ENCODE measurements at regions of chr17 and their contacts with region 1.

Region 1: GRCh38 chr17:75109407-75110233 is at the start of gene ARMC7:
- DNase-seq: peak; percentile 90 to 95
- ATAC-seq: peak; percentile 87 to 91 (median 90)
- H3K4me3 ChIP-seq: peak within 1 kb of the TSS; percentile 68 to 96 (median 86)
- H3K27ac ChIP-seq: peak within 1 kb of the TSS; percentile 35 to 91 (median 86)
- H3K4me1 ChIP-seq: peaks cover 5 to 52% (median 31%) of the 10 kb centered on the region in 9 donors
- H3K27me3 ChIP-seq: no peaks in the 10 kb centered on the region
- CTCF ChIP-seq: no peak
- total RNA-seq, gene ARMC7: 4.7 to 7.9 (median 5.2) TPM

Region 2: GRCh38 chr17:74987418-74987908 is 122.2 kb before region 1 on chr17 and contains the start of gene CDR2L:
- intact Hi-C with region 1: loop called in 1 of 10 experiments (anchors 5 kb)
- DNase-seq: peak; percentile 96 to 97
- ATAC-seq: peak; percentile 87 to 94 (median 92)
- H3K4me3 ChIP-seq: peak within 1 kb of the TSS; percentile 63 to 92 (median 80)
- H3K27ac ChIP-seq: peak within 1 kb of the TSS; percentile 87 to 100 (median 98)
- H3K4me1 ChIP-seq: peaks cover 0 to 52% (median 30%) of the 10 kb centered on the region in 9 donors
- H3K27me3 ChIP-seq: peaks cover 0 to 17% (median 0%) of the 10 kb centered on the region in 7 donors
- CTCF ChIP-seq: no peak
- total RNA-seq, gene CDR2L: 10.8 to 25.3 (median 16.3) TPM

Region 3: GRCh38 chr17:75069783-75070182 is 39.8 kb before region 1 on chr17:
- intact Hi-C with region 1: loop called in 2 of 10 experiments (anchors 5 kb)
- DNase-seq: no peak
- ATAC-seq: no peak
- H3K4me3 ChIP-seq: no peak overlapping the region
- H3K27ac ChIP-seq: no peak overlapping the region
- H3K4me1 ChIP-seq: peaks cover 0 to 19% (median 6%) of the 10 kb centered on the region in 9 donors
- H3K27me3 ChIP-seq: no peaks in the 10 kb centered on the region
- CTCF ChIP-seq: peak in 7 of 9 donors; percentile 12 to 45 (median 30)

Region 4: DNA sequence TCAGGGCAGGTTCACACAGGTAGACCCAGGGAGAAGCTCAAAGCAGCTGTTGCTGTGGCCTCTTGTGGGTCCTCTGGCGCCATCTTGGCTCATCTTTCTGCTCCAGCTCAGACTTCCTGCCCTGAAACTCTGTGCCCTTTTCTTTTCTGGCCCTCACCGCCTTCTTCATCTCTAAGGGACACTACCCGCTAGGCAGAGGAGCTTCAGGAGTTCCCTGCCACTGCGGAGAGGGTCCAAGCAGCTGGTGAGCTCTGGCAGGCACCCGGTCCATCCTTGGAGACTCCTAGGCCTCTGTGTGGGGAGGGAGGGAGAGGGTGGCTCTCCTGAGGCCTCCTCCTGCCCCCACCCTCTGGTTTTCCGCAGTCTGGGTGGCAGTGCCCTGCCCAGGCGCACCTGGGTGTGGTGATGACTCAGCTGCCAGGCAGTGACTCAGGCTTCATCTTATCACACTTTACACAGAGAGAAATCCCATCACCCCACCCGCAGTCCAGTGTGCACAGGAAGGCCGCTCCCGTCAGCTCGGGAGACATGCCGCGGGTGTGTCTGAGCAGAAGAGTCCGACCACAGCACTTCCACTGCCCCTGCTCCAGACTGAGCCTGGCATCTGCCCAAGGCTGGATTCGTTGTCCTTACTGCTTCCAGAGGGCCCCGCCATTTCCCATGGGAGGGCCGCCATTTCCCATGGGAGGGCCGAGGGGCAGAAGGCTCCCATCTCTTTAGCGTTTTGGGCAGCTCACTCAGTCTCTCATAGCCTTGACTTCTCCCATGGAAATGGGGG is 14.6 kb after region 1 on chr17:
- intact Hi-C with region 1: no loop called
- DNase-seq: peak; percentile 40 to 50
- ATAC-seq: peak; percentile 55 to 86 (median 72)
- H3K4me3 ChIP-seq: no peak overlapping the region
- H3K27ac ChIP-seq: peak overlapping the region in 8 of 10 donors; percentile 7 to 72 (median 42)
- H3K4me1 ChIP-seq: peaks cover 0 to 28% (median 10%) of the 10 kb centered on the region in 9 donors
- H3K27me3 ChIP-seq: no peaks in the 10 kb centered on the region
- CTCF ChIP-seq: no peak

Region 5: GRCh38 chr17:75173526-75173925 is 63.9 kb after region 1 on chr17:
- intact Hi-C with region 1: loop called in 7 of 10 experiments (anchors 2 to 10 kb)
- DNase-seq: no peak
- ATAC-seq: no peak
- H3K4me3 ChIP-seq: no peak overlapping the region
- H3K27ac ChIP-seq: no peak overlapping the region
- H3K4me1 ChIP-seq: peaks cover 0 to 21% (median 6%) of the 10 kb centered on the region in 9 donors
- H3K27me3 ChIP-seq: no peaks in the 10 kb centered on the region
- CTCF ChIP-seq: no peak

Region 6: DNA sequence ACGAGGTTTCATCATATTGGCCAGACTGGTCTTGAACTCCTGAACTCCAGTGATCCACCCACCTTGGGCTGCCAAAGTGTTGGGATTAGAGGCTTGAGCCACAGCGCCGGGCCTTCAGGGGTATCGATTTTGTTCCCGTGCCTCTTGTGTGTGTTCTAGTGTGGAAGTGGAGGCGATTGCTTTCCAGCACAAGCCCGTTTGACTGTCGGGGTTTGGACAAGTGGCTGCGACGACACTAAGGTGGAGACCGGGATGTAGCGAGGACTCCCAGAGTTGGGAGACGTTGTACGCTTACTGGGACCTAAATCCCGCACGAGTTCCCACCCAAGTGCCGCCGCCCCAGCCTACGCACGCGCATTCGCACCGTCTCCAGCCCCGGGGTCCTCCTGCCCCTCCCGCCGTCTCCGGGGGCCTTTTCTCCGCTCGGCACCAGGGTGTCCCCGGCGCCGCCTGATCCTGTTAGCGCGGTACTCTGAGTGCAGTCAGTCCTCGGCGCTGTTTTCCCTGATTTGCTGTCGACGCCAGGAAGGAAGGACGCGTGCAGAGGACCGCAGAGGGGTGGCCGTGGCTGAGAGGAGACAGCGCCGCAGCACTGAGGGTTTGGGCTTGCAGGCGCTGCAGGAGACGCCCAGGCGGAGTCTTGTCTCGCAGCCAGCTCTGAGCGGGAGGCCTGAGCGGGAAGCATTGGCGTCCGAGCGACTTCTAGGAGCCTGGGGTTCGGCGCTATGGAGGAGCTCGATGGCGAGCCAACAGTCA is 95.6 kb after region 1 on chr17 and contains the start of gene NUP85:
- intact Hi-C with region 1: loop called in 8 of 10 experiments (anchors 2 to 10 kb)
- DNase-seq: peak; percentile 95 to 96
- ATAC-seq: peak; percentile 93 to 98 (median 96)
- H3K4me3 ChIP-seq: peak within 1 kb of the TSS; percentile 67 to 99 (median 86)
- H3K27ac ChIP-seq: peak within 1 kb of the TSS; percentile 92 to 98 (median 96)
- H3K4me1 ChIP-seq: peaks cover 5 to 28% (median 21%) of the 10 kb centered on the region in 9 donors
- H3K27me3 ChIP-seq: no peaks in the 10 kb centered on the region
- CTCF ChIP-seq: no peak
- total RNA-seq, gene NUP85: 16.2 to 28.4 (median 20.4) TPM

Measured in heart right ventricle (tissue), 16 donors.